ENCODE measurements at regions of chr18 and their contacts with region 1.

Region 1: DNA sequence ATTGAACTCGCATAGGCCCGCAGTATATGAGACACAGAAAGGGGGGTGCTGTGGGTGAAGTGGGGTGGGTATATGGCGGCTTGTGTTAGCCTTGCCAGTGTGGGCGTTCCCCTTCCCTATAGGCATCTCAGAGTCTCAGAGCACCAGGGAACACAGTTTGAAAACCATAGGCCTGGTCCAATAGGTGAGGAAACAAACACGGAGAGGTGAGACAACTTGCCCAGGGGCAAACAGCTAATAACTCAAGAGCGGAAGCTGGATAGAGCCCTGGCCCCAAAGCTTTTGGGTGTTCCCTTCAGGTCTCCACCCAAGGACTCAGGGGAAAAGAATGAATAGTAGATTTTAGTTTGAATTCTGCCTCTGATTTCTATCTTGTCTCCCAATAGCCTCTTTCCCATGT is 7.9 kb downstream of the LIPG start:
- DNase-seq: no peak

Region 2: DNA sequence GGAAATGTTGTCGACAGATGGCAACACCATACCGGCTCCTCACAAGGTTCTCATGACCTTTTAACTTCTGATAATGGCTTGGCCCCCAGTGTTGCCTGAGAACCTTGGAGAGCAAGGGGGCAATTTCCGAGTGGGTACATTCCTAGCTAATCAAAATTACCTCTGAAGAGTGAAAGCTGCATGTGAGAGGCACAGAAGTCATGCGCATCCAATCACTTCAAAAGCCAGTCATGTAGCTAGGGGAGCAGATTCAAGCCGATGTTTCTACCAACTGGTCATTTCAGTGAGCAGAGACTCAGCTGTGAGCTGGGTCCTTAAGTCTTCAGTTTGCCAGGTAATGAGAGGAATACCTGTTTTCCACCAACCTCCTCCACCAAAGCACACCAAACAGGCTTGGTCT is 103.6 kb after region 1 on chr18:
- CTCF ChIA-PET with region 1: interaction called, 11 read pairs
- POLR2A ChIA-PET with region 1: no interaction called
- DNase-seq: no peak

Measured in HEK293T (cell line).